ENCODE measurements at regions of chr1 and their contacts with region 1.

Region 1: GRCh38 chr1:204207136-204207616 is 6.6 kb downstream of the GOLT1A start:
- DNase-seq: peak; percentile 79
- ATAC-seq: peak; percentile 99
- H3K4me3 Mint-ChIP-seq: no peak overlapping the region
- H3K27ac Mint-ChIP-seq: no peak overlapping the region
- H3K4me1 Mint-ChIP-seq: no peaks in the 10 kb centered on the region
- H3K27me3 Mint-ChIP-seq: peaks cover 47% of the 10 kb centered on the region

Region 2: GRCh38 chr1:204171751-204172178 is 35.4 kb before region 1 on chr1:
- CTCF ChIA-PET with region 1: interaction called, 31 read pairs
- POLR2A ChIA-PET with region 1: no interaction called
- DNase-seq: no peak
- ATAC-seq: no peak
- H3K4me3 Mint-ChIP-seq: no peak overlapping the region
- H3K27ac Mint-ChIP-seq: no peak overlapping the region
- H3K4me1 Mint-ChIP-seq: no peaks in the 10 kb centered on the region
- H3K27me3 Mint-ChIP-seq: no peaks in the 10 kb centered on the region

Region 3: GRCh38 chr1:204190212-204191211 is 16.7 kb before region 1 on chr1:
- CTCF ChIA-PET with region 1: interaction called, 26 read pairs
- POLR2A ChIA-PET with region 1: interaction called, 3 read pairs
- DNase-seq: no peak
- ATAC-seq: peak; percentile 64
- H3K4me3 Mint-ChIP-seq: no peak overlapping the region
- H3K27ac Mint-ChIP-seq: no peak overlapping the region
- H3K4me1 Mint-ChIP-seq: peaks cover 11% of the 10 kb centered on the region
- H3K27me3 Mint-ChIP-seq: peaks cover 46% of the 10 kb centered on the region